Psoas muscle (tissue), 8 donors: ENCODE measurements at regions of chr17 and their contacts with region 1.

Region 1: GRCh38 chr17:13212860-13213259 is 195.0 kb upstream of the ELAC2 start:
- DNase-seq: no peak
- ATAC-seq: no peak
- H3K4me3 ChIP-seq: no peak overlapping the region
- H3K27ac ChIP-seq: no peak overlapping the region
- H3K4me1 ChIP-seq: no peaks in the 10 kb centered on the region
- H3K27me3 ChIP-seq: no peaks in the 10 kb centered on the region
- CTCF ChIP-seq: no peak

Region 2: DNA sequence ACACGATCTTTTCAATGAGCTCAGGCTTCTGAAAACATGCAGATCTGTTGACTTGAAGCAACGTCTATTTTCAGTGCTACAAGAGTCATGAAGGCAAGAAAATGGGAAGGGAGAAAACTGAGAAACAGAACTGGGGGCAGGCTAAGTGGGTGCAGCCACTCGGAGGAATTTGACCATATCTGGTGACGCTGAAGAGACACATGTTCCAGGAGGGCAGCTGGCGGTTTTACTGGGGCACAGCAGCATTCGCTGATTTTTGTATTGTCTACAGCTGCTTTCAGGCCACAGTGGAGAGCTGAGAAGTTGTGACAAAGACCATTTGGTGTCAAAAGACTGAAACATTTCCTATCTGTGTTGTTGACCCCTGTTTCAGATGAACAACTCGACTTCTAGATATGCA is 92.0 kb before region 1 on chr17:
- intact Hi-C with region 1: no loop called
- DNase-seq: no peak
- ATAC-seq: no peak
- H3K4me3 ChIP-seq: no peak overlapping the region
- H3K27ac ChIP-seq: no peak overlapping the region
- H3K4me1 ChIP-seq: no peaks in the 10 kb centered on the region
- H3K27me3 ChIP-seq: no peaks in the 10 kb centered on the region
- CTCF ChIP-seq: no peak

Region 3: GRCh38 chr17:13153036-13153435 is 59.8 kb before region 1 on chr17:
- intact Hi-C with region 1: loop called in 1 of 2 experiments (anchors 10 kb)
- DNase-seq: no peak
- ATAC-seq: no peak
- H3K4me3 ChIP-seq: no peak overlapping the region
- H3K27ac ChIP-seq: no peak overlapping the region
- H3K4me1 ChIP-seq: no peaks in the 10 kb centered on the region
- H3K27me3 ChIP-seq: no peaks in the 10 kb centered on the region
- CTCF ChIP-seq: no peak

Region 4: GRCh38 chr17:13273806-13274205 is 60.9 kb after region 1 on chr17:
- intact Hi-C with region 1: loop called in 1 of 2 experiments (anchors 10 kb)
- DNase-seq: no peak
- ATAC-seq: no peak
- H3K4me3 ChIP-seq: no peak overlapping the region
- H3K27ac ChIP-seq: no peak overlapping the region
- H3K4me1 ChIP-seq: no peaks in the 10 kb centered on the region
- H3K27me3 ChIP-seq: no peaks in the 10 kb centered on the region
- CTCF ChIP-seq: no peak